PC-3 (cell line): ENCODE measurements at regions of chr3 and their contacts with region 1.

Region 1: GRCh38 chr3:146640955-146641867 is 36.1 kb upstream of the PLSCR5 start:
- DNase-seq: peak; percentile 77
- ATAC-seq: peak; percentile 85
- H3K4me3 ChIP-seq: no peak overlapping the region
- H3K27ac ChIP-seq: no peak overlapping the region
- H3K4me1 ChIP-seq: no peaks in the 10 kb centered on the region
- H3K27me3 ChIP-seq: no peaks in the 10 kb centered on the region
- CTCF ChIP-seq: peak; percentile 67

Region 2: DNA sequence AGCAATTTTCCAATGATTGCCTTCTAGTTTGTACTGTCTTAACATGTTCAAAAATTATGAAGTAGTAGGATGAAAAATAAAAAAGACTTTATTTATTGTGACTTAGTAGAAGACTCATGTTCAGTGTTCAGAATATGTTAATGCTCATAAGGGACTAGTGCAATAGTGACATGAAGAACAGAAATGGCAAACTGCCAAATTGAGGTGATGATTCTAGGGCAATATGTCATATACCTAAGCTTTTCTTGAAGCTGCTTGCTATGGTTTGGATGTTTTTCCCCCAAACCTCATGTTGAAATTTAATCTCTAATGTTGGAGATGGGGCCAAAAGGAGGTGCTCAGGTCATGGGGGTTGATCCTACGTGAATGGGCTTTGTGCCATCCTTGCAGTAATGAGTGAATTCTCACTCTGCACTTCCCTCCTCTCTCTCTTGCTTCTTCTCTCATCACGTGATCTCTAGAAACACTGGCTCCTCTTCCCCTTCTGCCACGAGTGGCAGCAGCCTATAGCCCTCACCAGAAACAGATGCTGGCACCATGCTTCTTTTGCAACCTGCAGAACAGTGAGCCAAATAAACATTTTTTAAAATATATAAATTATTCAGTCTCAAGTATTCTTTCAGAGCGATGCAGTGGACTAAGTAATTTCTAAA is 83.6 kb before region 1 on chr3:
- CTCF ChIA-PET with region 1: no interaction called
- POLR2A ChIA-PET with region 1: no interaction called
- intact Hi-C with region 1: no loop called
- DNase-seq: no peak
- ATAC-seq: no peak
- H3K4me3 ChIP-seq: no peak overlapping the region
- H3K27ac ChIP-seq: no peak overlapping the region
- H3K4me1 ChIP-seq: no peaks in the 10 kb centered on the region
- H3K27me3 ChIP-seq: no peaks in the 10 kb centered on the region
- CTCF ChIP-seq: no peak

Region 3: DNA sequence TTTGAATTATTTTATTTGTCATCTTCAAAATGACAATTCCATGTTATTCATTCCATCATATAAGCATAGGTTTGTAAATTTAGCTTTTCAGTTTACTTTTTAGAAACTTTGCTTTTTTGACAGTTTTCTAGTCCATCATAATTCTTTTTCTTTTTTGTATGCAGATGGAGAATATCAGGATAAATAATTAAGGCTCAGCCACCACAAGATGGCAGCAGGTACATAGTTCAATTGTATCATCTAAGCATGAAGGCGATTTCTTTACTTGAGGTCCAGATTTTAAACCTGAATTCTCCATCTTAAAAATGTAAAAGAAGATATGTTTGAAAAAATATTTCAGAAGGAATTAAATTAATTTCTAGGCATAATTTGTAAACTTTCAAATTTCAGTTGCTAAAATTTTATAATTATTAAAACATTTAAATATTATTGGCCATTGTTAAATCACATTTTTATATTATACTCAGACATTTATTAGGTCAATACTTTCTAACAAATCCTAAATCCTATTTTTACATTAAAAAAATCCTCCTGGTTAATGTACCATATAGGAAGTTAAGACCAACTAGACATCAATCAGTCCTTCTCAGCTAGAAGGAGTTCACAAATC is 51.2 kb before region 1 on chr3:
- CTCF ChIA-PET with region 1: interaction called, 4 read pairs
- POLR2A ChIA-PET with region 1: no interaction called
- intact Hi-C with region 1: loop called (anchors 1 kb)
- DNase-seq: peak; percentile 73
- ATAC-seq: peak; percentile 49; the same call in 1 of the 2 replicates
- H3K4me3 ChIP-seq: no peak overlapping the region
- H3K27ac ChIP-seq: no peak overlapping the region
- H3K4me1 ChIP-seq: 0 out of 2 replicates have a peak, but pooled peaks cover 3% of the 10 kb centered on the region
- H3K27me3 ChIP-seq: no peaks in the 10 kb centered on the region
- CTCF ChIP-seq: peak; percentile 79

Region 4: GRCh38 chr3:146655333-146655996 is 14.3 kb after region 1 on chr3:
- CTCF ChIA-PET with region 1: no interaction called
- POLR2A ChIA-PET with region 1: no interaction called
- intact Hi-C with region 1: no loop called
- DNase-seq: peak; percentile 1
- ATAC-seq: 0 out of 2 replicates have a peak, but pooled peaks have one; percentile 31
- H3K4me3 ChIP-seq: no peak overlapping the region
- H3K27ac ChIP-seq: no peak overlapping the region
- H3K4me1 ChIP-seq: no peaks in the 10 kb centered on the region
- H3K27me3 ChIP-seq: peaks cover 14% of the 10 kb centered on the region
- CTCF ChIP-seq: no peak

Region 5: GRCh38 chr3:146747928-146748327 is 106.7 kb after region 1 on chr3:
- CTCF ChIA-PET with region 1: no interaction called
- POLR2A ChIA-PET with region 1: no interaction called
- intact Hi-C with region 1: loop called (anchors 1 kb)
- DNase-seq: peak; percentile 46
- ATAC-seq: peak; percentile 25
- H3K4me3 ChIP-seq: peak overlapping the region; percentile 24
- H3K27ac ChIP-seq: peak overlapping the region; percentile 77
- H3K4me1 ChIP-seq: peaks cover 32% of the 10 kb centered on the region
- H3K27me3 ChIP-seq: no peaks in the 10 kb centered on the region
- CTCF ChIP-seq: peak; percentile 47

Region 6: GRCh38 chr3:146929696-146930095 is 288.5 kb after region 1 on chr3:
- CTCF ChIA-PET with region 1: no interaction called
- POLR2A ChIA-PET with region 1: no interaction called
- intact Hi-C with region 1: loop called (anchors 10 kb)
- DNase-seq: no peak
- ATAC-seq: no peak
- H3K4me3 ChIP-seq: no peak overlapping the region
- H3K27ac ChIP-seq: no peak overlapping the region
- H3K4me1 ChIP-seq: no peaks in the 10 kb centered on the region
- H3K27me3 ChIP-seq: peaks cover 54% of the 10 kb centered on the region
- CTCF ChIP-seq: no peak

Region 7: GRCh38 chr3:147191795-147192385 is 550.7 kb after region 1 on chr3:
- CTCF ChIA-PET with region 1: no interaction called
- POLR2A ChIA-PET with region 1: no interaction called
- intact Hi-C with region 1: loop called (anchors 2 kb)
- DNase-seq: peak; percentile 82
- ATAC-seq: peak; percentile 63; the same call in 1 of the 2 replicates
- H3K4me3 ChIP-seq: no peak overlapping the region
- H3K27ac ChIP-seq: no peak overlapping the region
- H3K4me1 ChIP-seq: no peaks in the 10 kb centered on the region
- H3K27me3 ChIP-seq: no peaks in the 10 kb centered on the region
- CTCF ChIP-seq: peak; percentile 85

Region 8: GRCh38 chr3:147418808-147419701 is 777.8 kb after region 1 on chr3:
- CTCF ChIA-PET with region 1: no interaction called
- POLR2A ChIA-PET with region 1: no interaction called
- intact Hi-C with region 1: no loop called
- DNase-seq: no peak
- ATAC-seq: no peak
- H3K4me3 ChIP-seq: no peak overlapping the region
- H3K27ac ChIP-seq: no peak overlapping the region
- H3K4me1 ChIP-seq: no peaks in the 10 kb centered on the region
- H3K27me3 ChIP-seq: peaks cover 95% of the 10 kb centered on the region
- CTCF ChIP-seq: no peak